Adrenal gland (tissue), 19 donors: ENCODE measurements at regions of chr1 and their contacts with region 1.

Region 1: DNA sequence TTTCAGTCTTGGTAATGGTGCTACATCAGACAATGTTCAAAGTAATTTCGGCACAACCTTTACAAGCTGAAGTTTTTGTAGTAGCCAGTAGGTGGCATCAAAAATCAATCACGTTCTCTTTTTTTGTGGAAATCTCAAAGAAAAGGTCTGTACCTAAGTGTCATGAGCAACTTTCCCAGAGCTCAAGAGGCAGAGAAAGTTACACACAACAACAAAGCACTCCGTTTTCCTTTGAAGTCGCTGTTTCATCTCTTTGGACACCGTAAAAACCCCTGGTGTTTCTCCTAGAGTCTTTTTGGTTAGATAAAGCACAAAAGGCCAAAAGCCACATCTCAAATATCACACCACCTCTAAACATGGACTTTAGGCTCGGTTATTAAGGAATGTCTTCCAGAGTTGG is 131.6 kb downstream of the LHX8 start:
- DNase-seq: no peak
- H3K4me3 ChIP-seq: no peak overlapping the region
- H3K27ac ChIP-seq: no peak overlapping the region
- H3K4me1 ChIP-seq: no peaks in the 10 kb centered on the region
- H3K27me3 ChIP-seq: no peaks in the 10 kb centered on the region
- CTCF ChIP-seq: peak; percentile 49 to 70 (median 64)
- POLR2A ChIP-seq: no peak

Region 2: GRCh38 chr1:75366595-75366994 is 100.8 kb after region 1 on chr1:
- intact Hi-C with region 1: no loop called
- DNase-seq: no peak
- H3K4me3 ChIP-seq: no peak overlapping the region
- H3K27ac ChIP-seq: no peak overlapping the region
- H3K4me1 ChIP-seq: no peaks in the 10 kb centered on the region
- H3K27me3 ChIP-seq: no peaks in the 10 kb centered on the region
- CTCF ChIP-seq: no peak
- POLR2A ChIP-seq: no peak

Region 3: GRCh38 chr1:75506976-75507375 is 241.2 kb after region 1 on chr1:
- intact Hi-C with region 1: no loop called
- DNase-seq: no peak
- H3K4me3 ChIP-seq: no peak overlapping the region
- H3K27ac ChIP-seq: no peak overlapping the region
- H3K4me1 ChIP-seq: peaks cover 0 to under 1% of the 10 kb centered on the region in 2 donors
- H3K27me3 ChIP-seq: no peaks in the 10 kb centered on the region
- CTCF ChIP-seq: no peak
- POLR2A ChIP-seq: no peak

Region 4: GRCh38 chr1:75582725-75583261 is 317.0 kb after region 1 on chr1:
- intact Hi-C with region 1: loop called in 1 of 2 experiments (anchors 5 kb)
- DNase-seq: peak in 1 of 7 donors; percentile 14
- H3K4me3 ChIP-seq: no peak overlapping the region
- H3K27ac ChIP-seq: no peak overlapping the region
- H3K4me1 ChIP-seq: no peaks in the 10 kb centered on the region
- H3K27me3 ChIP-seq: no peaks in the 10 kb centered on the region
- CTCF ChIP-seq: peak in 5 of 6 experiments; percentile 26 to 51 (median 36)
- POLR2A ChIP-seq: no peak

Region 5: DNA sequence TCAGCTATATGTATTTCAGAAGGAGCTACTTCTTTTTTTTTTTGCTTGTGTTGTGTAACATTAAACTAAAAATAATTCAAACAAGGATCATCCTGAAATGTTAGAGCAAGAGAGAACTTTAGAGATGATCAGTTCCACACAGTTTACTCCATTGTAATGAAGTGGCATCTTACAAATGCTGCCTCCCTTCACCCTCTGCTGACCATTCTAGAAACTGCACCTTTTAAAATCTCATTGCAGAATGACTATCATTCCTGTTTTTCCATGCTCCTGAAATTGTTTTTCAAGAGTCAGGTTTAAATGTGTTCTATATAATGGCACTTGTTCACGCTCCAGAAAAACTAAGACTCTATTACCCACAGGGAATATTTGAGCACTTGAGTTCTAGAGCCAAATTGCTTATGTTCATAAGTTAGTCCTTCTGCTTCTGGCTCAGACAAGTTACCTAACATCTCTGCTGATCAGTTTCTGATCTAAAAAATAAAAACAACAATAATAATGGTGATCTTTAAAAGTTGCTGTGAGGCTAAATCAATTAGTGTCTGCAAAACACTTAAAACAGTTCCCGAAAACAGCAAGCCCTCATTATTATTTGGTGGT is 366.7 kb after region 1 on chr1:
- intact Hi-C with region 1: loop called in 1 of 2 experiments (anchors 5 kb)
- DNase-seq: peak in 1 of 7 donors; percentile 32
- H3K4me3 ChIP-seq: no peak overlapping the region
- H3K27ac ChIP-seq: no peak overlapping the region
- H3K4me1 ChIP-seq: no peaks in the 10 kb centered on the region
- H3K27me3 ChIP-seq: no peaks in the 10 kb centered on the region
- CTCF ChIP-seq: peak; percentile 62 to 80 (median 71)
- POLR2A ChIP-seq: no peak